ENCODE measurements at regions of chr19 and their contacts with region 1.

Region 1: GRCh38 chr19:17859533-17860330 is at the start of gene RPL18A:
- DNase-seq: peak; percentile 99 to 100
- H3K4me3 ChIP-seq: peak within 1 kb of the TSS; percentile 94 to 100 (median 98)
- H3K27ac ChIP-seq: peak within 1 kb of the TSS; percentile 87 to 98 (median 94)
- H3K4me1 ChIP-seq: peaks cover 33 to 59% (median 49%) of the 10 kb centered on the region in 4 donors
- H3K27me3 ChIP-seq: no peaks in the 10 kb centered on the region
- CTCF ChIP-seq: peak in 5 of 7 experiments; percentile 73 to 95 (median 76)
- EP300 ChIP-seq: no peak
- POLR2A ChIP-seq: peak in 2 of 4 donors; percentile 53 to 80
- total RNA-seq, gene RPL18A: 854 to 1,923 (median 1,089) TPM

Region 2: DNA sequence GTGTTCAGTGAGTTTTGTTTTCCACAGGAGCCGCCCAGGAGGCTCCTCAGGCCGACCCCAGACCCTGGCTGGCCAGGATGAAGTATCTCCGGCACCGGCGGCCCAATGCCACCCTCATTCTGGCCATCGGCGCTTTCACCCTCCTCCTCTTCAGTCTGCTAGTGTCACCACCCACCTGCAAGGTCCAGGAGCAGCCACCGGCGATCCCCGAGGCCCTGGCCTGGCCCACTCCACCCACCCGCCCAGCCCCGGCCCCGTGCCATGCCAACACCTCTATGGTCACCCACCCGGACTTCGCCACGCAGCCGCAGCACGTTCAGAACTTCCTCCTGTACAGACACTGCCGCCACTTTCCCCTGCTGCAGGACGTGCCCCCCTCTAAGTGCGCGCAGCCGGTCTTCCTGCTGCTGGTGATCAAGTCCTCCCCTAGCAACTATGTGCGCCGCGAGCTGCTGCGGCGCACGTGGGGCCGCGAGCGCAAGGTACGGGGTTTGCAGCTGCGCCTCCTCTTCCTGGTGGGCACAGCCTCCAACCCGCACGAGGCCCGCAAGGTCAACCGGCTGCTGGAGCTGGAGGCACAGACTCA is 51.9 kb before region 1 on chr19:
- intact Hi-C with region 1: no loop called
- DNase-seq: no peak
- H3K4me3 ChIP-seq: no peak overlapping the region
- H3K27ac ChIP-seq: no peak overlapping the region
- H3K4me1 ChIP-seq: peaks cover 0 to 8% (median 5%) of the 10 kb centered on the region in 4 donors
- H3K27me3 ChIP-seq: peaks cover 0 to 25% (median 0%) of the 10 kb centered on the region in 3 donors
- CTCF ChIP-seq: no peak
- EP300 ChIP-seq: no peak
- POLR2A ChIP-seq: no peak

Region 3: DNA sequence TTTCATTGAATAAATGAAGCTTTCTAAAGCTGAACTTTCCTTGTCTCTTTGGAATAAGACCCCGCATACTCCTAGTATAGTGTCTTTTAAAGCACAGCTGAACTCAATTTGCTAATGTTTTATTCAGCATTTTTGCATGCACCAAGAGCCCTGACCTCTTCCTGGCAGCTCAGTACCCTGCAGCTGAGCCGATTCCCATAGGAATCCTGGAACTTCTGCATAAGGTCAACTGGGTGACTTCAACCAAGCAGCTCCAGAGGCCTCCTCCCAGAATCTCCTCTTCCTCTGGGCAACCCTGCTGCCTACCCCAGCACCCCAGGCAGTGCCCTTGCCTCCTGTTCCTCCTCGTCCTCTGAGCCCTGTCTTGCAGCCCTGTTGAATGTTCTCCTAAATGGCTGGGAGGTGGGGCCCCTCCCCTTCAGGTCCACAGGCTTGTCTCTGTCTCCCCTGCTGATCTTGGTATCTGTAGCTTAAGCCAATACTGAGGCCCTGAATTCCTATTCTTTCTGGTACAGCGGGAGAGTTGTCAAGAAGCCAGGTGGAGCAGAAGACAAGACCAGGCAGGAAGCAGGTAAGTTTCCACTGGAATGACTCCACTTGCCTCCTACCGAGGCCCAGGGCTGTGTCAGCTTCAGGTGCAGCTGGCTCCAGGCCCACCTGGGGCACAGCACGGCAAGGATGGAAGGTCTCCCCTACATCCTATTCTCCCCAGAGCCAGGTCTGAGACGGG is 49.4 kb after region 1 on chr19:
- intact Hi-C with region 1: no loop called
- DNase-seq: no peak
- H3K4me3 ChIP-seq: no peak overlapping the region
- H3K27ac ChIP-seq: no peak overlapping the region
- H3K4me1 ChIP-seq: no peaks in the 10 kb centered on the region
- H3K27me3 ChIP-seq: peaks cover 0 to 13% (median 0%) of the 10 kb centered on the region in 3 donors
- CTCF ChIP-seq: no peak
- EP300 ChIP-seq: no peak
- POLR2A ChIP-seq: no peak

Region 4: DNA sequence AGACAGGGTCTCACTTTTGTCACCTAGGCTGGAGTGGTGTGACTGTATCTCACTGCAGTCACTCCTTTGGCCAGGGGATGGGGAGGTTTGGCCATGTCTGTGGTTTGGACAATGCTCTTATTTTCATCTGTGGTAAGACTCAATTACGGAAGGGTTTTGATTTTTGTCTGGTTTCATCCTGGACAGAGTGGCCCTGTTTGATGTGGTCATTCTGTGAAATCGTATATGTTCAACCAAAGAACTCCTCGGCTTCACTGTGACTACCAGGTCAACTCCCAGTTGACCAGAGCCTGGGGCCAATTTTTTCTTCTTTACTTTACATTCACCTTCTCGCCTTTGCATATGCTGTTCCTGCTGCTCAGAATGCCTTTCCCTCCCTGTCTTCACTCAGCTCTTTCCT is 66.3 kb after region 1 on chr19:
- intact Hi-C with region 1: no loop called
- DNase-seq: no peak
- H3K4me3 ChIP-seq: no peak overlapping the region
- H3K27ac ChIP-seq: no peak overlapping the region
- H3K4me1 ChIP-seq: no peaks in the 10 kb centered on the region
- H3K27me3 ChIP-seq: peaks cover 0 to 7% (median 0%) of the 10 kb centered on the region in 3 donors
- CTCF ChIP-seq: no peak
- EP300 ChIP-seq: no peak
- POLR2A ChIP-seq: no peak

Region 5: GRCh38 chr19:17938092-17938845 is 78.5 kb after region 1 on chr19:
- intact Hi-C with region 1: loop called (anchors 5 kb)
- DNase-seq: peak; percentile 83 to 92
- H3K4me3 ChIP-seq: no peak overlapping the region
- H3K27ac ChIP-seq: no peak overlapping the region
- H3K4me1 ChIP-seq: peaks cover 13 to 24% (median 16%) of the 10 kb centered on the region in 4 donors
- H3K27me3 ChIP-seq: no peaks in the 10 kb centered on the region
- CTCF ChIP-seq: peak in 5 of 7 experiments; percentile 85 to 94 (median 90)
- EP300 ChIP-seq: no peak
- POLR2A ChIP-seq: no peak

Region 6: GRCh38 chr19:17950310-17951156 is 90.8 kb after region 1 on chr19:
- intact Hi-C with region 1: no loop called
- DNase-seq: peak in 1 of 2 donors; percentile 77
- H3K4me3 ChIP-seq: peak overlapping the region in 1 of 4 donors; percentile 13
- H3K27ac ChIP-seq: no peak overlapping the region
- H3K4me1 ChIP-seq: peaks cover 37 to 64% (median 60%) of the 10 kb centered on the region in 4 donors
- H3K27me3 ChIP-seq: peaks cover 36 to 74% (median 65%) of the 10 kb centered on the region in 3 donors
- CTCF ChIP-seq: no peak
- EP300 ChIP-seq: no peak
- POLR2A ChIP-seq: no peak

Region 7: GRCh38 chr19:17996826-17997316 is 137.1 kb after region 1 on chr19:
- intact Hi-C with region 1: loop called (anchors 10 kb)
- DNase-seq: peak; percentile 91 to 94
- H3K4me3 ChIP-seq: peak overlapping the region in 1 of 4 donors; percentile 4
- H3K27ac ChIP-seq: no peak overlapping the region
- H3K4me1 ChIP-seq: peaks cover 9 to 21% (median 16%) of the 10 kb centered on the region in 4 donors
- H3K27me3 ChIP-seq: peaks cover 0 to 30% (median 0%) of the 10 kb centered on the region in 3 donors
- CTCF ChIP-seq: peak in 6 of 7 experiments; percentile 90 to 99 (median 98)
- EP300 ChIP-seq: no peak
- POLR2A ChIP-seq: no peak

Measured in stomach (tissue), 19 donors.